GM10248 (cell line): ENCODE measurements at regions of chr3 and their contacts with region 1.

Region 1: DNA sequence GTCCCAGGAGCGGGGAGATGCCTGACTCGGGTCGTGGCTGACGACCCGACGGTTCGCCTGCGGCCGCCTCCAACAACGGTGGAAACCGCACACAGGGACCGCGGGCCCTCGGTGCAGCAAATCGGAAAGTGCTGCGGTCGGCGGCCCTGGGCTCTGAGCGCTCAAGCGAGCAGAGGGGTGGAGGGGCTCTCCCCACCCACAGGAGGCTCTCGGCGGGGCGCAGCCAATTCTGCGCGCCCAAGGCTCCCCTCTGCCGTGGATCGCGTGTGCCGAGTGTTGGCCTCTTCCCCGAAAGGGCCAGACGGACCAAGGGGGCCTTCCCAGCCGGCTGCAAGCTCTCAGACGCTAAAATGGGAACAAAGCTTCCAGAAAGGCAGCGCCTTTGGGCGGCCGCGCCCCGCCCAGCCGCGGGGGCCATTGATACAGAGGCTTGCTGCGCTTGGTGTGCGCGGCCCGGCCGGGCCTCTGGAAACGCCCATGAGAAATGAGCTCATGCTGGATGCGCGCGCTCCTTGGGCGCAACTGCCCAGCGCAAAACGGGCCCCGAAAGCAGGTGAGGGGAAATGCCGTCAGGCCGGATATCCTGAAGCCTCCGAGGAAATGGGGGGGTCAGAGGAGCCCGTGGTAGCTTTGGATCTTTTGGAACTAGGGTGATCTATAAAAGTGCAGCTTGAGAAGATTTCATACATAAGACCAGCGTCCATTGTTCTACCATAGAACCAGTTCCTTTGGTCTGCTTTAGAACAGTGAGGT is 1.2 kb upstream of the GSK3B start:
- DNase-seq: peak; percentile 79
- CTCF ChIP-seq: no peak

Region 2: DNA sequence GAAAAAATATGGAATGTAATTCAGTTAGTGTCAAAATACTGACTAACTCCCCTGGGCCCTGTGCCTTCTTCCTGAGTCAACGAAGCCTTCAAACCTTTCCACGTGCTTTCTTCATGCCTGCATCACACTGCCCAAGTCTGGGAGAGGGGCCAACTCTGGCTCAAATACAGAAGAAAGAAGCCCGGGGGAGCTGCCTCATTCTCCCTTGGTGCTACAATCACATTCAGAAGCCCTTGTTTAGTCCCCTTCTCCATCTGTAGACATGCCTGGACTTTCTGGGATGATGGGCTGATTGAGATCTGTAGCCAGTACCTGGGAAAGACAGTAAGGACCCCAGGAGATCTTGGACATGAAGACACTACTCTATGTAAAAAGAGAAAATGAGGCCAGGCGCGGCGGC is 76.7 kb after region 1 on chr3:
- CTCF ChIA-PET with region 1: no interaction called
- POLR2A ChIA-PET with region 1: interaction called, 11 read pairs
- DNase-seq: no peak
- CTCF ChIP-seq: no peak